ENCODE measurements at regions of chr16 and their contacts with region 1.

Region 1: DNA sequence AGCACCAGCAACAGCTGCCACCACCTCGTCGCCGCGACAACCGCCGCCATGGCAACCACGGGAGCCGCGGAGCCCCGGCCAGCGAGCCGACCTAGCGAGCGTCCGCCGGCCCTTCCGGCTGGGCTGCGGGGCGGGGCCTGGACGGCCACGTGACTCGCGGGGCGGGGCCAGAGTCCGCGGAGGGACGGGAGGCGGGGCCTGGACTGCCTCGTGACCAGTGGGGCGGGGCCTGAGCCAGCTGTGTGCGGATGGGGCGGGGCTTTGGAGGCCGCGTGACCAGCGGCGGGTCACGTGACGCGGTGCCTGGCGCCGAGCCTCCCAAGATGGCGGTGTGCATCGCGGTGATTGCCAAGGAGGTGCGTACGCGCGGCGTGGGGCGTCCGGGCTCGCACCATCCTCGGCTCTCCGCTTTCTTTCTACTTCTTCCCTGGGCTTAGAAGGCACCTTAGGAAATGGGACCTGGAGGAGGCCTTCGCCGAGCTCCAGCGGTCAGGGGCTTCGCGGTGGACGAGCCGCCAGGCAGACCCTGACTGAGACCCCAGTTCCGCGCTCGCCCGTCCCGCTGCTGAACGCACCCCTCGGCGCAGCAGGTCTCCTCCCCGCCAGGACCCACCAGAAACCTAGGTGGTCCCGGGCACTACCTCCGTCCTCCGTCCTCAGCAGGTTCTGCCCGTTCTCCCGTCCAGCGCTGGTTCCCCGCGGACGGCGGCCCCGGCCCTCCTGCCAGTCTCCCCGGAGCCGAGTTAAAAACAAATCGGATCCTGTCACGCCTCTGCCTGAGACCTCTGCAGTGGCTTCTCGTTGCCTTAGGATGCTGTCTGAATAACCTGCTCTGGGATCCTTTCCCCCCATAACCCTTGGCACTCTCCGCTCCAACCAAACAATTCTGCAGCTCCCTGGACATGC is at the starts of genes GALNS and TRAPPC2L:
- DNase-seq: peak; percentile 99
- H3K4me3 ChIP-seq: peak within 1 kb of the TSS; percentile 90 to 100 (median 97)
- H3K27ac ChIP-seq: peak within 1 kb of the TSS; percentile 69 to 94 (median 88)
- H3K4me1 ChIP-seq: peaks cover 32 to 80% (median 67%) of the 10 kb centered on the region in 6 donors
- H3K27me3 ChIP-seq: no peaks in the 10 kb centered on the region
- CTCF ChIP-seq: peak in 1 of 11 experiments; percentile 21
- POLR2A ChIP-seq: peak in 1 of 3 donors; percentile 68
- total RNA-seq, gene GALNS: 37.6 to 71.6 (median 53.4) TPM
- total RNA-seq, gene TRAPPC2L: 28.9 to 44.1 (median 38.6) TPM

Region 2: GRCh38 chr16:88811769-88812512 is 45.1 kb before region 1 on chr16 and contains the start of gene APRT:
- intact Hi-C with region 1: loop called (anchors 5 kb)
- DNase-seq: peak; percentile 99
- H3K4me3 ChIP-seq: peak within 1 kb of the TSS; percentile 71 to 98 (median 94)
- H3K27ac ChIP-seq: peak within 1 kb of the TSS; percentile 85 to 96 (median 94)
- H3K4me1 ChIP-seq: peaks cover 17 to 64% (median 37%) of the 10 kb centered on the region in 6 donors
- H3K27me3 ChIP-seq: no peaks in the 10 kb centered on the region
- CTCF ChIP-seq: peak in 8 of 11 experiments; percentile 4 to 60 (median 34)
- POLR2A ChIP-seq: peak in 2 of 3 donors; percentile 51 to 56
- total RNA-seq, gene APRT: 84.1 to 112 (median 96.8) TPM